ENCODE measurements at regions of chr22 and their contacts with region 1.

Region 1: GRCh38 chr22:30169002-30169401 is 77.6 kb downstream of the LIF start:
- DNase-seq: no peak
- H3K4me3 Mint-ChIP-seq: no peak overlapping the region
- H3K27ac Mint-ChIP-seq: no peak overlapping the region
- H3K4me1 Mint-ChIP-seq: peaks cover 7% of the 10 kb centered on the region
- H3K27me3 Mint-ChIP-seq: no peaks in the 10 kb centered on the region

Region 2: GRCh38 chr22:30104501-30105156 is 64.4 kb before region 1 on chr22:
- CTCF ChIA-PET with region 1: no interaction called
- intact Hi-C with region 1: loop called (anchors 2 kb)
- DNase-seq: no peak
- H3K4me3 Mint-ChIP-seq: no peak overlapping the region
- H3K27ac Mint-ChIP-seq: peak overlapping the region; percentile 24
- H3K4me1 Mint-ChIP-seq: peaks cover 38% of the 10 kb centered on the region
- H3K27me3 Mint-ChIP-seq: no peaks in the 10 kb centered on the region

Region 3: GRCh38 chr22:30132290-30132996 is 36.6 kb before region 1 on chr22:
- CTCF ChIA-PET with region 1: interaction called, 3 read pairs
- intact Hi-C with region 1: loop called (anchors 1 kb)
- DNase-seq: no peak
- H3K4me3 Mint-ChIP-seq: no peak overlapping the region
- H3K27ac Mint-ChIP-seq: peak overlapping the region; percentile 73
- H3K4me1 Mint-ChIP-seq: peaks cover 19% of the 10 kb centered on the region
- H3K27me3 Mint-ChIP-seq: no peaks in the 10 kb centered on the region

Region 4: DNA sequence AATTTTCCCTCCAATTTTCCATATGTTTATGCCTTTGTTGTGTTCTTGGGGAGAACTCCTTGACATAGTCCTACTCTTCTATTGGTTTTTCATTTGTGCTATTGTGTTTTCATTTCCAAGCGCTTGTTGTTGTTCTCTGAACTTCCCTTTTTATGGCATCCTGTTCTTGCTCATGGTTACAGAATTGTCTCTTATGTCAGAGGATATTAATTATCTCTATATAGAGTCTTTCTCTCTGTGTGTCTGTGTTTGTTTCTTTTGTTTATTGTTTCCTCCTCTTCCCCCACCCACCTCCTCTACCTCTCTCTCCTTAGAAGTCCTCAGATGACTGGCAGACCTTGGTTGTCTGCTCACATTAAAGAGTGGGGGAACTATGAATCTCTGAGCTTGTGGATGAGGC is 18.8 kb before region 1 on chr22:
- CTCF ChIA-PET with region 1: no interaction called
- intact Hi-C with region 1: no loop called
- DNase-seq: no peak
- H3K4me3 Mint-ChIP-seq: no peak overlapping the region
- H3K27ac Mint-ChIP-seq: no peak overlapping the region
- H3K4me1 Mint-ChIP-seq: peaks cover 8% of the 10 kb centered on the region
- H3K27me3 Mint-ChIP-seq: no peaks in the 10 kb centered on the region

Region 5: DNA sequence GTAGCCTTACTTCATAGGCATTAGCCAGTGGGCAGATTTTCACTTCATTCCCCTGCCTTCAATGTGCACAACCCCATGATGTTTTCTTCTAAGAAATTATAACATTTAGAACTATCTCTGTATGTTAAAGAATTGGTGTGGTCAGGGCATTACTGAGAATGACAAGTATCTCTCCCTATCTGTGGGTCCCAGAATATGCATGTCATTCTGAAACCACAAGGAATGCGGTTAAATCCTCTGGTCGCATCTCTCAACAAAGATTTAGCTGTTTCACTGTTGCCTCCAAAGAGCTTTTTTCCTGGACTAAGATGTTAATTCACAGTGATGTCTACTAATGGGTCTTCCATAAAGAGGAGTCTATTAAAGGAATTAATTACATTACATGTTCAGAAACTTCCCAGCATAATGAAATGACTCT is 14.9 kb after region 1 on chr22:
- CTCF ChIA-PET with region 1: interaction called, 26 read pairs
- intact Hi-C with region 1: loop called (anchors 2 kb)
- DNase-seq: no peak
- H3K4me3 Mint-ChIP-seq: no peak overlapping the region
- H3K27ac Mint-ChIP-seq: peak overlapping the region; percentile 93
- H3K4me1 Mint-ChIP-seq: peaks cover 87% of the 10 kb centered on the region
- H3K27me3 Mint-ChIP-seq: no peaks in the 10 kb centered on the region

Region 6: DNA sequence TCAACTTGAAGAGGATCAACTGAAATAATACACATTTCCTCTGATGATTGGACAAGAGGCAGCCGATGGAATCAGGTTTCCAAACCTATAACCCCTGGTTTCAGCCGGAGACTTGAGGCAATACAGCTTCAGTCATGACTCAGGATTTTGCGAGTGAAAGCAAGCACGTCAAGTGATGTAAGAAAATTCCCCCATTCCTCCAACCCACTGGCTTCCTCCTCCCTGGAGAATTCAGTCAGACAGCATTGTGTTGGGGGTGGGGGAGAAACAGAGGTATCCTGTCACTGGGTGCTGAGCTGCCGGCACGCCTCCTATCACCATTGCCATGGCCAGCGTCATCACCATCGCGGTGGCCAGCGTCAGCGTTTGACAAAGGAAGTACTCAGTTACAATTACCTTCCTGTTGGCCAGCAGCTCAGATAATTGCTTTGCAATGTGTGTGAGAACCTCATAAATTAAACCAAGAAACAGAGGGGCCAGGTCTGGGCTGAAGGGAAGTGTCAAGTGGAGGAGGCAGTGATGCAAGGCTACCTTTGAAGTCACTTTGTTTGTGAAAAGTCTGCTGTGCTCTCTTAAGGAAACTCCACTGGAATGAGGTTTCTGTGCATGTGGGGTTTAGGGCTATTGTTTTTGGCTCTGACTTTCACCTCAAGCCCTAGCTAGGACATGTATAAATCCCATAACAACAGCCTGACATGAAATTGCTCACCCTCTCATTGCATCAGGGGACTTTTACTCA is 27.3 kb after region 1 on chr22:
- CTCF ChIA-PET with region 1: interaction called, 4 read pairs
- intact Hi-C with region 1: loop called (anchors 1 kb)
- DNase-seq: peak; percentile 84
- H3K4me3 Mint-ChIP-seq: peak overlapping the region; percentile 57
- H3K27ac Mint-ChIP-seq: peak overlapping the region; percentile 95
- H3K4me1 Mint-ChIP-seq: peaks cover 70% of the 10 kb centered on the region
- H3K27me3 Mint-ChIP-seq: no peaks in the 10 kb centered on the region

Measured in activated naive CD4-positive, alpha-beta T cell treated with anti-CD3 and anti-CD28 coated beads for 36 hours (primary cell).